ENCODE measurements at regions of chr11 and their contacts with region 1.

Region 1: GRCh38 chr11:73876424-73877300 is at the starts of genes COA4 and PAAF1:
- DNase-seq: peak; percentile 79 to 96
- H3K4me3 ChIP-seq: peak within 1 kb of the TSS; percentile 73 to 86
- H3K27ac ChIP-seq: peak within 1 kb of the TSS; percentile 82 to 86
- H3K4me1 ChIP-seq: peaks cover 3 to 15% of the 10 kb centered on the region in 2 donors
- H3K27me3 ChIP-seq: no peaks in the 10 kb centered on the region
- CTCF ChIP-seq: no peak
- total RNA-seq, gene COA4: 92.7 TPM
- total RNA-seq, gene PAAF1: 36.3 TPM

Region 2: GRCh38 chr11:73907191-73907590 is 30.5 kb after region 1 on chr11:
- intact Hi-C with region 1: no loop called
- DNase-seq: no peak
- H3K4me3 ChIP-seq: no peak overlapping the region
- H3K27ac ChIP-seq: no peak overlapping the region
- H3K4me1 ChIP-seq: no peaks in the 10 kb centered on the region
- H3K27me3 ChIP-seq: no peaks in the 10 kb centered on the region
- CTCF ChIP-seq: no peak

Region 3: DNA sequence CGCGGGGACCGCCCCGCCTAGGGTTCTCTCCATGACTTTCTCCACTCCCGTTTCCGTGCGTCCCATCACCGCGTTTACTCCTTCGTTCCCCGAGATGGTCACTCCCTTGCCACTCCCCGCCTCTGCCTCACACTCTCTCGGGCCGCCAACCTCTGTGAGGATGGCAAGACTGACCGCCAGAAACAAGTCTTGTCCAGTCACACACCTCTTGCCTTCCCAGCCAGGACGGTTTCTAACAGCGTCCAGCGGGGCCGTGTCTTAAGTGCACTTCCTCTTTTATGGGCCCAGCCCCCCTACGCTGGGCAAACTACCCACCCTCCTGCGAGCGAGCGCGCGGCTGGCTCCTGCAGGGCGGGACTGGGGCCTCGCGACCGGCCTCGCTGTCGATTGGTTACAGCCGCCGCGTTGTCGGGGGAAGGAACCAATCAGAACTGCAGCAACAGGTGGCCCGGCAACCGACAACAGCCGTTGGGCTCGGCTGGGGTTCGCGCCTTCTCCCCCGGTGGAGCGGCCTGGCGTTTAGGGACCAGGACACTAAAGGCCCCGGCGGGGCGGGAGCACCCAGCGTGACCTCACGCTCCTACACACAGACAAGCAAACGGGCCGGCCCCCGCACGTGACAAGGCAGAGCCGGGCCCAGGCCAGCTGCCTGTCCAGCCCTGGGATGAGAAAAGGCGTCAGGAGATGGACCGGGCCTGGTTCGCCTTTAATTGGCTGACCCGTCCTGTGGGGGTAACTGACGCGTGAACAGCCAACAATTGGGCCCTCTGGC is 106.5 kb after region 1 on chr11:
- intact Hi-C with region 1: loop called (anchors 2 kb)
- DNase-seq: peak; percentile 82 to 97
- H3K4me3 ChIP-seq: peak overlapping the region; percentile 61 to 74
- H3K27ac ChIP-seq: peak overlapping the region; percentile 84 to 89
- H3K4me1 ChIP-seq: peaks cover 5 to 15% of the 10 kb centered on the region in 2 donors
- H3K27me3 ChIP-seq: no peaks in the 10 kb centered on the region
- CTCF ChIP-seq: no peak